MCF 10A (cell line): ENCODE measurements at regions of chr10 and their contacts with region 1.

Region 1: GRCh38 chr10:18666810-18667209 is 7.6 kb downstream of the ARL5B start:
- DNase-seq: peak; percentile 64
- H3K4me3 Mint-ChIP-seq: peak overlapping the region; percentile 21
- H3K27ac Mint-ChIP-seq: peak overlapping the region; percentile 44
- H3K4me1 Mint-ChIP-seq: peaks cover 27% of the 10 kb centered on the region
- H3K27me3 Mint-ChIP-seq: no peaks in the 10 kb centered on the region
- CTCF ChIP-seq: no peak

Region 2: GRCh38 chr10:18635995-18636394 is 30.8 kb before region 1 on chr10:
- CTCF ChIA-PET with region 1: no interaction called
- POLR2A ChIA-PET with region 1: no interaction called
- intact Hi-C with region 1: no loop called
- DNase-seq: no peak
- H3K4me3 Mint-ChIP-seq: no peak overlapping the region
- H3K27ac Mint-ChIP-seq: no peak overlapping the region
- H3K4me1 Mint-ChIP-seq: no peaks in the 10 kb centered on the region
- H3K27me3 Mint-ChIP-seq: no peaks in the 10 kb centered on the region
- CTCF ChIP-seq: no peak

Region 3: GRCh38 chr10:18681366-18681765 is 14.6 kb after region 1 on chr10:
- CTCF ChIA-PET with region 1: no interaction called
- POLR2A ChIA-PET with region 1: interaction called, 16 read pairs
- intact Hi-C with region 1: no loop called
- DNase-seq: peak; percentile 58
- H3K4me3 Mint-ChIP-seq: peak overlapping the region; percentile 71
- H3K27ac Mint-ChIP-seq: peak overlapping the region; percentile 90
- H3K4me1 Mint-ChIP-seq: peaks cover 34% of the 10 kb centered on the region
- H3K27me3 Mint-ChIP-seq: no peaks in the 10 kb centered on the region
- CTCF ChIP-seq: no peak